Breast epithelium (tissue), 4 donors: ENCODE measurements at regions of chr14 and their contacts with region 1.

Region 1: DNA sequence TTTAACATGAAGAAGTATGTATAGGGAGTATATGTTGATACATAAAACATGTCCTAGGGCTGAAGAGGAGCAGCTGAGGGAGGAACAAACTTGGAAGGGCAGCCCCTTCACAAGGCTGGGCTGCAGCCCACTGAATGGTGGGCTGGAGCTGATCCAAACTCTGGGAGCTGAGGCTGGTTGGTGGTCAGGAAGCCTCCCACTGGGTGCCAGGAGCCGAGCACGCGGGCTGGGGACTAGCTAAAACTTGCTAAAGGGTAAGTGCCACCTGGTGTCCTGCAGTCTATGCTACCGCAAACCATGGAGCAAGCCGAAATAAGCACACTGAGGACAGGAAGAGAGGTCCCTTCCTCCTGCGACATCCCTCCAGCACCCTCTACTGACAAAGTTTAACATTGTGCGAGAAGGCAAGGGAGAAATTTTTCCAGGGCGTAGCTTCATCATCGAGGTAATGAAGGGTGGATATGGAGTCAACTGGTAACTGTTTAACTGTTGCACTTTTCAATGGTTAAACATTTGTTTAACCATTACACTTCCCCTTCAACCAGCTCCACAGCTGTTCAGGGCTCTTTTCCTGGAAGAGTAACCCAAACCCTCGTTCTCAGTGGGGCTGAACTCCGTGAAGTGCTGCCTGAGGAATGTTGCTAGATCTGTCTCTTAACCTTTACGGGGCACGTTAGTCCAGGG is 42.2 kb downstream of the EGLN3 start:
- DNase-seq: no peak
- H3K4me3 ChIP-seq: no peak overlapping the region
- H3K27ac ChIP-seq: no peak overlapping the region
- H3K4me1 ChIP-seq: no peaks in the 10 kb centered on the region
- H3K27me3 ChIP-seq: no peaks in the 10 kb centered on the region
- CTCF ChIP-seq: no peak
- POLR2A ChIP-seq: no peak

Region 2: DNA sequence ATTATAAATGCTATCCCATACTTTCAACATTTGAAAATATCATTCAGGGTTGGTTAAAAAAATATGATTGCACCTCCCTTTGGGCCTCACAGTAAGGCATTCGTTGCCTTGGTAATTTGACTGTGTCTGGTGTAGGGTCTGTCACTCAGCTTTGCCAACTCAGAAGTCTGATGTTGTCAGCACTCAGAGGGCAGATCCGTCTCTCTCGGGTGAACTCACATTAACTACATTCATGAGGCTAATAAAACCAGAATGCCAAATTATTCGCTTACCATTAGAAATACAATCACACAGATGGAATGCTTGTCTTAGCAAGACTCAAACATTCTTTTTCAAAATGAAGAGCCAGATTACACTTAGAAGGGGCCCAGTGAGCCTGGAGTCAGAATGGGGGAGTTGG is 917.0 kb before region 1 on chr14:
- intact Hi-C with region 1: loop called (anchors 5 kb)
- DNase-seq: no peak
- H3K4me3 ChIP-seq: no peak overlapping the region
- H3K27ac ChIP-seq: no peak overlapping the region
- H3K4me1 ChIP-seq: no peaks in the 10 kb centered on the region
- H3K27me3 ChIP-seq: no peaks in the 10 kb centered on the region
- CTCF ChIP-seq: no peak
- POLR2A ChIP-seq: no peak

Region 3: DNA sequence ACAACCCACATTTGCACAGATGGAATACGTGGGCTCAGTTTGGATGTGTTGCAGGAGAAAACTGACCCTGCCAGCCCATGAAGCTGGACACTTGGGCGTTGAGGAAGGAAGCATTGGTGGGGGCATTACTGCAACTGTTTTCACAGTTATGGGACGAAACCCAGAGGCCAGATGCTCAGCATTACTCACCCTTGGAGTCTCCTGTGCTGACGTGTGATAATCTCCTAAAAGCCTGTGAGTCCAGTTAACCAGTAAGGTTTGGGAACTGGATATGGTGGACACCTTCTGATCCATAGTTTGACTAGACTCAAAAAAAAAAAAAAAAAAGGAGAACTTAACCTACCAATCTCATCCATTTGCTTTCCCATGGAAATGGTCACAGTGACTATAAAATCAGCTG is 95.0 kb after region 1 on chr14:
- intact Hi-C with region 1: no loop called
- DNase-seq: no peak
- H3K4me3 ChIP-seq: no peak overlapping the region
- H3K27ac ChIP-seq: no peak overlapping the region
- H3K4me1 ChIP-seq: no peaks in the 10 kb centered on the region
- H3K27me3 ChIP-seq: no peaks in the 10 kb centered on the region
- CTCF ChIP-seq: no peak
- POLR2A ChIP-seq: no peak